Activated CD4-positive, alpha-beta memory T cell treated with anti-CD3 and anti-CD28 coated beads for 36 hours (primary cell): ENCODE measurements at regions of chr5 and their contacts with region 1.

Region 1: GRCh38 chr5:102536323-102536928 is 37.6 kb upstream of the SLCO6A1 start:
- DNase-seq: no peak
- H3K4me3 Mint-ChIP-seq: no peak overlapping the region
- H3K27ac Mint-ChIP-seq: no peak overlapping the region
- H3K4me1 Mint-ChIP-seq: no peaks in the 10 kb centered on the region
- H3K27me3 Mint-ChIP-seq: peaks cover 6% of the 10 kb centered on the region

Region 2: DNA sequence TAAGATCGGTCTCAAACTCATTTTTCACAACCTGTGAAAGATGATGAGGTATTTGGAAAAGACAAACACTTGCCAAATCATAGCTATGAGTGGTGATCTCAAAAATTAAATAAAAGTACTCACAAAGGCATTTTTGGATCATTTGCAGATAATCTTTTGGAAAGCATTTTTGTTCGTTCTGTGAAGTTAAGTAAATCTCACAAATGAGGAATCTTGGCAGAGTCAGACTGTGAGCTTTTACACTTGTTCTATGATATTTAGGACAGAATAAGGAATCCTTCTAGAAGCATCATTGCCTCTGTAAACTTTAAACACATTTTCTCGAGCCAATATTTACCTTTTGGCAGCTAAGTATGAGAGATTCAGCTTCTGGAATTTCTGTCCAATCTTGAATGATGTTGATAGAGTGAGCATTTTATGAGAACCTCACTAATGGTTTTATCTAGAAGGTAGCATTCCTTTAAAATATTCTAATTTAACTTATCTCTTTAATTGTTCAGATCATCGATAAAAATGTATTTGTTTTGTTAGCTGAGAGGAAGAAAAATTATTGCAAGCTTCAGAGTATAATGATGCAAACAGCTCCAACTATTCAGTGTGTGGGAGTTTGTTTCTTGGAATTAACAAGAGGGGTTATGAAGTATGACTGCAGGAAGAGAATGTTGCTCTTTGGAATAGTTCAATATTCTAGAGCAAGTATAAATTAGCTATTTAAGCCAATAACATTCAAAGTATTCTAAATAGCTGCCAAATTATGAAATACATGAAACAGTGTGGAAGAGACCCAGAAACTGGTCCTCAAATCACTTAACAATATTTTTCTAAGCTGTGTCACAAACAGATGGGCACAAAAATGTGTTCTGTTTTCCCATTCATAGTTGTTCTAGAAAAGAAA is 11.0 kb after region 1 on chr5:
- CTCF ChIA-PET with region 1: interaction called, 13 read pairs
- POLR2A ChIA-PET with region 1: no interaction called
- intact Hi-C with region 1: no loop called
- DNase-seq: no peak
- H3K4me3 Mint-ChIP-seq: no peak overlapping the region
- H3K27ac Mint-ChIP-seq: no peak overlapping the region
- H3K4me1 Mint-ChIP-seq: no peaks in the 10 kb centered on the region
- H3K27me3 Mint-ChIP-seq: peaks cover 2% of the 10 kb centered on the region

Region 3: GRCh38 chr5:102670224-102670836 is 133.9 kb after region 1 on chr5:
- CTCF ChIA-PET with region 1: no interaction called
- POLR2A ChIA-PET with region 1: no interaction called
- intact Hi-C with region 1: loop called (anchors 2 kb)
- DNase-seq: no peak
- H3K4me3 Mint-ChIP-seq: no peak overlapping the region
- H3K27ac Mint-ChIP-seq: no peak overlapping the region
- H3K4me1 Mint-ChIP-seq: no peaks in the 10 kb centered on the region
- H3K27me3 Mint-ChIP-seq: peaks cover 9% of the 10 kb centered on the region

Region 4: GRCh38 chr5:102811972-102812371 is 275.5 kb after region 1 on chr5:
- CTCF ChIA-PET with region 1: no interaction called
- POLR2A ChIA-PET with region 1: no interaction called
- intact Hi-C with region 1: no loop called
- DNase-seq: no peak
- H3K4me3 Mint-ChIP-seq: no peak overlapping the region
- H3K27ac Mint-ChIP-seq: no peak overlapping the region
- H3K4me1 Mint-ChIP-seq: peaks cover 9% of the 10 kb centered on the region
- H3K27me3 Mint-ChIP-seq: no peaks in the 10 kb centered on the region